Tibial artery (tissue), 4 donors: ENCODE measurements at regions of chr11 and their contacts with region 1.

Region 1: DNA sequence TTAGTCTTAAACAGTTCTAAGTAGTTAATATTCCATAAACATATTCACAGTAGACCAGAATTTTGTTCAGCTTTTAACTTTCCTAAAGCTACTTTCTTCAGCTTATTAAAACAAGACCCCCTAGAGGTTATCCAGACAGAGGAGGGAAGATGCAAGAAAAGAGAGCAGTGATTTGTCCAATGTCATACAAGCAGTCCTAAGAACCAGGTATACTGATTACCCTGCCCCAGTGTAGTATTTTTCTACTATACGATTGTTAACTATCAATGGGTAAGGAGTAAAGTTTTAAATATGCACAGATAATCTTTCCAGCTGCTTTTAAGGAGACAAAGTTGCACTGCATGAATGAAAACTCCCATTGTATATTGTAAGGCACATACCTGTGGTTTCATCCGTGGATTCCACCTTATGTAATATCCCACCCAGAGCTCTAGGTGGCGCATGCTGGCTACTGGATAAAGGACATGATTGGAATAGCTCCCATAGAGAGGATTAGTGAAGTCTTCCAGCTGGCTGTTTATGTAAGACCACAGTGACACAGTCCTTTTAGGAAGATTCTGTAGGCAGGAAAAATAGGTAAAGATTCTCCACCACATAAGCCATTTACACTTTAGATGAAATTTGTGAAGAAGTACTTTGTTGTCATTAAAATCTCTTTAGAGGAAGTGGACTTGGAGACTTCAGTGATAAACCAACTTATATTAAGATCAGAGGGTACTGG is 45.6 kb downstream of the CEP57 start:
- DNase-seq: peak; percentile 63 to 71
- H3K4me3 ChIP-seq: no peak overlapping the region
- H3K27ac ChIP-seq: no peak overlapping the region
- H3K4me1 ChIP-seq: no peaks in the 10 kb centered on the region
- H3K27me3 ChIP-seq: no peaks in the 10 kb centered on the region
- CTCF ChIP-seq: peak; percentile 81 to 90

Region 2: GRCh38 chr11:95821640-95822039 is 14.3 kb before region 1 on chr11:
- intact Hi-C with region 1: no loop called
- DNase-seq: no peak
- H3K4me3 ChIP-seq: no peak overlapping the region
- H3K27ac ChIP-seq: no peak overlapping the region
- H3K4me1 ChIP-seq: no peaks in the 10 kb centered on the region
- H3K27me3 ChIP-seq: no peaks in the 10 kb centered on the region
- CTCF ChIP-seq: no peak

Region 3: GRCh38 chr11:96424693-96425092 is 588.8 kb after region 1 on chr11:
- intact Hi-C with region 1: loop called (anchors 10 kb)
- DNase-seq: no peak
- H3K4me3 ChIP-seq: no peak overlapping the region
- H3K27ac ChIP-seq: no peak overlapping the region
- H3K4me1 ChIP-seq: no peaks in the 10 kb centered on the region
- H3K27me3 ChIP-seq: peaks cover 0 to 11% of the 10 kb centered on the region in 2 donors
- CTCF ChIP-seq: no peak